Activated B cell treated with CpG ODN at 0.5 μM for 24 hours (primary cell): ENCODE measurements at regions of chr16 and their contacts with region 1.

Region 1: DNA sequence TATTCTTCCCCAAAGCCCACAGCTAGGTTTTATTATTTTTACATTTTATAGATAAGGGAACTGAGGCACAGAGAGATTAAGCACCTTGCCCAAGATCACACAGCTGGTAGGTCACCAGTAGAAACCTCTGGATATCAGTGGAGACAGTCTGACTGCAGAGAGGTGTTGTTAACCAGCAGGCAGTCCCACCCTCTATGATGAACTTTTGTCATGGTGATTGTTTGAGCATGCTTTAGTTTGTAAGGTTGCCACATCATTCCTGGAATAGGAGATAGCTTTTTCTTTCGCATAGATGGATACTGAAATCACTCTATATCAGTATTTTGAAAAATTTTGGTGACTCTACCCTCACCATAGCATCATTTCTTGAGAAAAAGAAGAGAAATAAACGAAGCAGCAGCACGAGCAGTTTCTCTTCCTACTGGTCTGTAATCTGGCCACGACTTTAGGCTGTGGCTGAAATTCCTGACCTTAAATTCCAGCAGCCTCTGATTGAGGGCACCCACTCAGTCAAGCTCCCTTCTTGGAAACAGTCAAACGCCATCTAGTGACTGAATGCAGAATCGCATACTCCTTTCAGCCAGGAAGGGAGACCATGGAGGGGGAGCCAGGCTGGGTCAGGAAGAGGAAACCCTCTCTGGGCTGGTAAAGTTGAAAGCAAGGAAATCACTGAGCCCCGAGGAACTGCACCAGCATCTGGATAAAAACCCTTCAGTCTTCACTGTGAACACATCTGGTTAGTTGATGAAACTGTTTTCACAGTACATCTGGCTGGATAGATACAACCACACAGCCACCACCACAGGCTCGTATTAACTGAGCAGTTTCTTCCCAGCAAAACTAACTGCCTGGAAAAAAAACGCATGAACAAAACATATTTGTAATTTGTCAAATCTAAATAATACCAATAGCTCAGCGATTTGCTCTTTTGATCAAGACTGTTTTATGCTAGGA is 108.4 kb upstream of the XYLT1 start:
- DNase-seq: no peak
- ATAC-seq: peak; percentile 70
- H3K4me3 Mint-ChIP-seq: no peak overlapping the region
- H3K27ac Mint-ChIP-seq: no peak overlapping the region
- H3K4me1 Mint-ChIP-seq: no peaks in the 10 kb centered on the region
- H3K27me3 Mint-ChIP-seq: peaks cover 6% of the 10 kb centered on the region
- CTCF ChIP-seq: peak; percentile 83

Region 2: GRCh38 chr16:17194190-17194780 is 384.9 kb before region 1 on chr16:
- CTCF ChIA-PET with region 1: interaction called, 12 read pairs
- POLR2A ChIA-PET with region 1: no interaction called
- intact Hi-C with region 1: loop called (anchors 1 kb)
- DNase-seq: peak; percentile 52
- ATAC-seq: peak; percentile 56
- H3K4me3 Mint-ChIP-seq: no peak overlapping the region
- H3K27ac Mint-ChIP-seq: no peak overlapping the region
- H3K4me1 Mint-ChIP-seq: no peaks in the 10 kb centered on the region
- H3K27me3 Mint-ChIP-seq: no peaks in the 10 kb centered on the region
- CTCF ChIP-seq: no peak

Region 3: DNA sequence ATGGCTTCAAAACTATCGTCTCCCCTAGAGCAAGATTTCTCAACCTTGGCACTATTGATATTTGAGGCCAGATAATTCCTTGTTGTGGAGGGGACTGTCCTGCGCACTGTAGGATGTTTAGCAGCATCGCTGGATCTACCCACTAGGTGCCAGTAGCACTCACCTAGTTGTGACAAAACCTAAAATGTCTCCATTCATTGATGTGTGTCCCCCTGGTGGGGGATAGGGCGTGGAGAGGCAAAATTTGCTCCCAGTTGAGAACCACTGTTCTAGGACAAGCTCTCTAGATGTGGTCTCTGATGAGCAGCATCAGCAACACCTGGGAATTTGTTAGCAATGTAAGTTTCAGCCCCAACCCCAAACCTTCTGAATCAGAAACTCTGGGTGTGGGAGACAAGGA is 367.4 kb before region 1 on chr16:
- CTCF ChIA-PET with region 1: interaction called, 4 read pairs
- POLR2A ChIA-PET with region 1: no interaction called
- intact Hi-C with region 1: loop called (anchors 5 kb)
- DNase-seq: no peak
- ATAC-seq: peak; percentile 34
- H3K4me3 Mint-ChIP-seq: no peak overlapping the region
- H3K27ac Mint-ChIP-seq: no peak overlapping the region
- H3K4me1 Mint-ChIP-seq: peaks cover 10% of the 10 kb centered on the region
- H3K27me3 Mint-ChIP-seq: no peaks in the 10 kb centered on the region
- CTCF ChIP-seq: no peak

Region 4: GRCh38 chr16:17277977-17278381 is 301.2 kb before region 1 on chr16:
- CTCF ChIA-PET with region 1: interaction called, 14 read pairs
- POLR2A ChIA-PET with region 1: no interaction called
- intact Hi-C with region 1: loop called (anchors 1 kb)
- DNase-seq: peak; percentile 25
- ATAC-seq: peak; percentile 55
- H3K4me3 Mint-ChIP-seq: peak overlapping the region; percentile 32
- H3K27ac Mint-ChIP-seq: no peak overlapping the region
- H3K4me1 Mint-ChIP-seq: peaks cover 77% of the 10 kb centered on the region
- H3K27me3 Mint-ChIP-seq: no peaks in the 10 kb centered on the region
- CTCF ChIP-seq: no peak

Region 5: DNA sequence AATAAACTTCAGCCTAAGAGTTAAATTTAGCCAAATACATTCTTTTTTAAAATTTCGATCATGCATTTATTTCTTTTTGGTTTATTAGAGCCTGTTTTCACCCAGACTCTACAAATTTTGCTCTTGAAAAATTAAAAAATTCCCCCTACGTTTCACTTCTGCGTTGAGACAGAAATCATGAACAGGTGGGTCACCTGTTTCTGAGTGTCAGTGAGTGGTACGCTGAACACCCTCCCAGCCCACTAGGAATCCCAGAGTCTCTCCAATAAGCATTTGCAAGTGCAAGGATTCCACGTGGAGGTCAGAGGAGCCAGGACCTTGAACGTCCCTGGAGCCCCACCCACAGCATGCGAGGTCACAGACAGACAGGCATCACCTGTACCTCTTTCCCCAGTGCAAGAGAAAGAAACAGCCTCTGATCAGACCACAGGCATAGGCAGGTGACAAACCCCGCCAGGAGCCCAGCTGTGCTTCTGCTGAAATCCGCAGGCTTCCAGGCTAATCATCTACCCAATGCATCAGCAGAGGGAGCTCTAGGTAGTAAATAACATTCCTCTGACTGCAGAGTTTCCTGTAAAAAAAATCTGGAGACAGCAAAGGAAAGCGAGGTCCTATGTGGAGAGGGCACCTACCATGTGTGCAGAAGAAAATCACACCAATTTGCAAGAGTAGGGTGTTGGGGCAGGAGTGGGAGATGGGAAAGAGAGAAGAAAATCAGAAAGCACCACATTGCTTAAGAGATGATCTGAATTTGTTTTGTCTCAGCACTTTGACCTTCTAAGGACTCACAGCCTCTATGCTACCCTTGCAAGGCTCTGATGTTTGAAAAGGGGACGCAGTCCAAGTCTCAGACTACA is 102.6 kb before region 1 on chr16:
- CTCF ChIA-PET with region 1: interaction called, 13 read pairs
- POLR2A ChIA-PET with region 1: no interaction called
- intact Hi-C with region 1: loop called (anchors 1 kb)
- DNase-seq: no peak
- ATAC-seq: peak; percentile 72
- H3K4me3 Mint-ChIP-seq: peak overlapping the region; percentile 47
- H3K27ac Mint-ChIP-seq: peak overlapping the region; percentile 16
- H3K4me1 Mint-ChIP-seq: peaks cover 35% of the 10 kb centered on the region
- H3K27me3 Mint-ChIP-seq: peaks cover 11% of the 10 kb centered on the region
- CTCF ChIP-seq: no peak

Region 6: GRCh38 chr16:17504050-17504449 is 75.1 kb before region 1 on chr16:
- CTCF ChIA-PET with region 1: no interaction called
- POLR2A ChIA-PET with region 1: no interaction called
- intact Hi-C with region 1: no loop called
- DNase-seq: no peak
- ATAC-seq: no peak
- H3K4me3 Mint-ChIP-seq: no peak overlapping the region
- H3K27ac Mint-ChIP-seq: no peak overlapping the region
- H3K4me1 Mint-ChIP-seq: no peaks in the 10 kb centered on the region
- H3K27me3 Mint-ChIP-seq: peaks cover 3% of the 10 kb centered on the region
- CTCF ChIP-seq: no peak